ENCODE measurements at regions of chr20 and their contacts with region 1.

Region 1: GRCh38 chr20:45311589-45312211 is 3.6 kb upstream of the MATN4 start:
- DNase-seq: peak; percentile 47
- ATAC-seq: peak; percentile 97
- H3K4me3 ChIP-seq: no peak overlapping the region
- H3K27ac ChIP-seq: no peak overlapping the region
- H3K4me1 ChIP-seq: peaks cover 0 to 10% of the 10 kb centered on the region in 2 experiments; a peak in 2 of 4 replicates
- H3K27me3 ChIP-seq: no peaks in the 10 kb centered on the region
- CTCF ChIP-seq: peak; percentile 61 to 96 (median 84); a peak in 5 of 6 replicates
- POLR2A ChIP-seq: no peak
- RAD21 ChIP-seq: peak; percentile 75

Region 2: GRCh38 chr20:45300961-45301360 is 10.7 kb before region 1 on chr20:
- CTCF ChIA-PET with region 1: interaction called, 15 read pairs
- POLR2A ChIA-PET with region 1: no interaction called
- RAD21 ChIA-PET with region 1: no interaction called
- intact Hi-C with region 1: no loop called
- DNase-seq: peak; percentile 50
- ATAC-seq: peak; percentile 99
- H3K4me3 ChIP-seq: no peak overlapping the region
- H3K27ac ChIP-seq: no peak overlapping the region
- H3K4me1 ChIP-seq: peaks cover 0 to 14% of the 10 kb centered on the region in 2 experiments; a peak in 2 of 4 replicates
- H3K27me3 ChIP-seq: no peaks in the 10 kb centered on the region
- CTCF ChIP-seq: peak in 2 of 3 experiments; percentile 73 to 83; a peak in 4 of 6 replicates
- POLR2A ChIP-seq: no peak
- RAD21 ChIP-seq: no peak